T-cell (primary cell): ENCODE measurements at regions of chr2 and their contacts with region 1.

Region 1: DNA sequence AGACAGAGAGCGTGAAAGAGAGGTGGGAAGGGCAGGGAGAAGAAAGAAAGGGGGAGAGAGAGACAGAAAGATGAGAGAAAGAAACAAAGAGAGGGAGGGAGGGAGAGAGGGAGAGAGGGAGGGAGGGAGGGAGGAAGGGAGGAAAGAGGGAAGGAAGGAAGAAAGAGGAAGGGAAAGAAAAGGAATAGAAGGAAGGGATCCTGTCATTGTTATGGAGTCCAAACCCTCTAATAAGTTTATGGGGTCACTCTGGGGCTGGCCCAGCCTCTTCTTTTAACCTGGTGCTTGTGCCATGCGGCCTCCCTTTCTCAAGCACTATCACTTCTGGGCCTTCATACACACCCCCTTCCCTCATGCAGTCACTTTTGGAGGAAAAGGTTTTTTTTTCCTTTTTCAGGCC is 58.5 kb downstream of the FAM161A start:
- DNase-seq: no peak
- ATAC-seq: no peak
- H3K4me3 ChIP-seq: no peak overlapping the region
- H3K4me3 Mint-ChIP-seq: no peak overlapping the region
- H3K27ac ChIP-seq: no peak overlapping the region
- H3K27ac Mint-ChIP-seq: no peak overlapping the region
- H3K4me1 ChIP-seq: peaks cover 0 to 6% of the 10 kb centered on the region in 2 experiments
- H3K4me1 Mint-ChIP-seq: peaks cover 0 to 8% (median 6%) of the 10 kb centered on the region in 3 donors
- H3K27me3 ChIP-seq: peaks cover 0 to 21% of the 10 kb centered on the region in 2 experiments
- H3K27me3 Mint-ChIP-seq: peaks cover 7 to 16% of the 10 kb centered on the region in 2 donors

Region 2: GRCh38 chr2:61493523-61493942 is 301.9 kb before region 1 on chr2:
- CTCF ChIA-PET with region 1: no interaction called
- POLR2A ChIA-PET with region 1: no interaction called
- DNase-seq: peak in 3 of 35 experiments; percentile 2 to 42 (median 8)
- ATAC-seq: peak; percentile 45 to 77 (median 65)
- H3K4me3 ChIP-seq: no peak overlapping the region
- H3K4me3 Mint-ChIP-seq: peak overlapping the region; percentile 21 to 42 (median 37)
- H3K27ac ChIP-seq: peak overlapping the region; percentile 26
- H3K27ac Mint-ChIP-seq: peak overlapping the region; percentile 85 to 89
- H3K4me1 ChIP-seq: peaks cover 5 to 14% of the 10 kb centered on the region in 2 experiments
- H3K4me1 Mint-ChIP-seq: peaks cover 14 to 25% (median 25%) of the 10 kb centered on the region in 3 donors
- H3K27me3 ChIP-seq: no peaks in the 10 kb centered on the region
- H3K27me3 Mint-ChIP-seq: no peaks in the 10 kb centered on the region

Region 3: DNA sequence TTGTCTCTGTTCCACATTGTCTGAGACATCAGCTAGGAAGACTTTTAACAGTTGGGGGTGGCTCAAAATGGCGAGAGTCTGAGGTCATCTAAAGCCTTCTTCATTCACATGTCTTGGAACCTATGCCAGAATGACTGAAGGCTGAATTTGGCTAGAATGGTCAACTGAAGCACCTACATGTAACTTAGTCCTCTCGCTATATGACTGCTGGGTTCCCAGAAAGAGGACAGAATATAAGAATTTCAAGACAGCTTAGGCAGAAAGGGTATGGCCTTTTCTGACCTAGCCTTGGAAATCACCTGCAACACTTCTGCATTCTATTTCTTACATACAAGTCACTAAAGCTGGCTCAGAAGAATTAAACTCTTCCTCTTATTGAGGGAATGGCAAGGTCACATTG is 1179.6 kb after region 1 on chr2:
- CTCF ChIA-PET with region 1: interaction called in 1 of 2 experiments, 11 read pairs
- POLR2A ChIA-PET with region 1: no interaction called
- DNase-seq: no peak
- ATAC-seq: no peak
- H3K4me3 ChIP-seq: no peak overlapping the region
- H3K4me3 Mint-ChIP-seq: no peak overlapping the region
- H3K27ac ChIP-seq: no peak overlapping the region
- H3K27ac Mint-ChIP-seq: no peak overlapping the region
- H3K4me1 ChIP-seq: no peaks in the 10 kb centered on the region
- H3K4me1 Mint-ChIP-seq: no peaks in the 10 kb centered on the region
- H3K27me3 ChIP-seq: no peaks in the 10 kb centered on the region
- H3K27me3 Mint-ChIP-seq: no peaks in the 10 kb centered on the region